Naive thymus-derived CD8-positive, alpha-beta T cell (primary cell): ENCODE measurements at regions of chr14 and their contacts with region 1.

Region 1: GRCh38 chr14:73753959-73754882 is 40.0 kb upstream of the PNMA1 start:
- DNase-seq: peak in 1 of 10 donors; percentile 45
- ATAC-seq: peak; percentile 22 to 29
- H3K4me3 Mint-ChIP-seq: peak overlapping the region; percentile 78 to 94 (median 84)
- H3K27ac Mint-ChIP-seq: peak overlapping the region; percentile 92 to 99 (median 99)
- H3K4me1 Mint-ChIP-seq: peaks cover 61 to 95% (median 93%) of the 10 kb centered on the region in 4 donors
- H3K27me3 Mint-ChIP-seq: no peaks in the 10 kb centered on the region

Region 2: GRCh38 chr14:72503696-72504368 is 1250.4 kb before region 1 on chr14:
- POLR2A ChIA-PET with region 1: no interaction called
- DNase-seq: no peak
- ATAC-seq: no peak
- H3K4me3 Mint-ChIP-seq: no peak overlapping the region
- H3K27ac Mint-ChIP-seq: no peak overlapping the region
- H3K4me1 Mint-ChIP-seq: no peaks in the 10 kb centered on the region
- H3K27me3 Mint-ChIP-seq: peaks cover 0 to 11% (median 4%) of the 10 kb centered on the region in 5 donors

Region 3: DNA sequence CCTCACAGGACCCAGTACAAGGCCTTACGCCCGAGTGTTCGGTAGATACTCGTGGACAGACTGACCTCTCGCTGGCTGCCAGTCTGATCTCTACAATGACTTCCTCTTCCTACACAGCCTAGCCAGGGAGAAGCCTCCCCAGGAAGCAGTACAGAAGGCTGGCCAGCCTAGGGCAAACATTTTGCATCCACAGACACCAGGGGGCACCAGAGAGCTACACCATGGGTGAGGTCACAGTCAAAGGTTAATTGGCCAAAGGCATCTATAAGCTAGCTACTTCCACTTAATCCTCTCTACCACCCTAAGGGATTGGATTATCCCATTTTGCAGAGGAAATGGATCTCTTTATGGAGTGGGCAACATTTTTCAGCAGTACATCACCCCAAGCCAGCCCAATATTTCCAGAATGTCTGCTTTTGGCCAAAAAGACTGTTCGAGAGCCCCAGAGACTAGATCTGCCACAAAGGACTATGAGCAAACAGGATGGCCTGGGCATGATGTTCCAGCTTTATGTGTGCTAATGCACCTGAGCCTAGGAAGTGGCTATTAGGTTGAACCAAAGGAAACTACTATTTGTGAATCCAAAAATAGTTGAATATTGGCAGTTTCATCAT is 25.4 kb before region 1 on chr14:
- POLR2A ChIA-PET with region 1: interaction called, 37 read pairs
- DNase-seq: peak; percentile 66 to 91 (median 83)
- ATAC-seq: peak; percentile 90 to 95
- H3K4me3 Mint-ChIP-seq: no peak overlapping the region
- H3K27ac Mint-ChIP-seq: peak overlapping the region; percentile 65 to 91 (median 81)
- H3K4me1 Mint-ChIP-seq: peaks cover 9 to 26% (median 17%) of the 10 kb centered on the region in 4 donors
- H3K27me3 Mint-ChIP-seq: no peaks in the 10 kb centered on the region

Region 4: GRCh38 chr14:73771848-73772638 is 17.8 kb after region 1 on chr14:
- POLR2A ChIA-PET with region 1: interaction called, 145 read pairs
- DNase-seq: peak in 9 of 10 donors; percentile 44 to 84 (median 65)
- ATAC-seq: peak; percentile 89
- H3K4me3 Mint-ChIP-seq: peak overlapping the region; percentile 43 to 75 (median 70)
- H3K27ac Mint-ChIP-seq: peak overlapping the region; percentile 70 to 97 (median 92)
- H3K4me1 Mint-ChIP-seq: peaks cover 33 to 83% (median 74%) of the 10 kb centered on the region in 4 donors
- H3K27me3 Mint-ChIP-seq: no peaks in the 10 kb centered on the region

Region 5: DNA sequence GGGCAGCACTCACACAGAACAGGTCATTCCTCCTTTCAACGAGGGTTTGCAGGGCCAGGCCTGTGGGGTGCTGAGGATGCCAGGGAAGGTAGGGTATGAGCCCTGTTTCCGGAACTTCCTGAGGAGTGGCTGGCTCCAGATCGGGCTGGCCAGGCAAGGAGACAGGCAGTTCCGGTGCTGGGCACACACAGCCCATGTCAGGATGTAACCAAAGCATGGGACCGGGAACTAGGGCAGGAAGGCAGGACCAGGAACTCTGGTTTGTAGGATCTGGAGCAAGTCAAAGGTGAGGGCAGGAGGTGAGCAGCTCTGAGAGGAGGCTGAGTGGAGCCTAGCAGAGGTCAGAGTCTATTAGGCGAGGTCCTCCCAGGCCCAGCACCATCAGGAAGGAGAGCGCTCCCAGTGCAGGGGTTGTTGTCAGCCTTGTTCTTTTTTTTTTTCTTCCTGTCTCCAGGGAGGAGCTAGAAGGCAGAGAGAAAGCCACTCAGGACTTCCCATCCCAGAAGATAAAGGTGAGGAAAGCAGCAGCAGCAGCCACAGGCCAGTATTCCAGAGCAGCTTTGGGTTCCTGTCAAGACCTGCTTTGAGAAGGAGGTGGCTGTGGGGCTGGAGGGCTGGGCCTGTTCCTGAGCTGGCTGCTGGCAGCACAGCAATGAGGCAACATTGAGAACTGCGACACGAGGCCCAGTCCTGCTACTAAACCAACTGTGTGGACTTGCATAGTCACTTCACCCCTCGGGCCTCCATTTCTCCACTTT is 48.4 kb after region 1 on chr14:
- POLR2A ChIA-PET with region 1: no interaction called
- DNase-seq: no peak
- ATAC-seq: no peak
- H3K4me3 Mint-ChIP-seq: no peak overlapping the region
- H3K27ac Mint-ChIP-seq: no peak overlapping the region
- H3K4me1 Mint-ChIP-seq: peaks cover 0 to 4% (median 2%) of the 10 kb centered on the region in 4 donors
- H3K27me3 Mint-ChIP-seq: peaks cover 0 to 3% (median 0%) of the 10 kb centered on the region in 5 donors